CD4-positive, alpha-beta memory T cell (primary cell): ENCODE measurements at regions of chr5 and their contacts with region 1.

Region 1: DNA sequence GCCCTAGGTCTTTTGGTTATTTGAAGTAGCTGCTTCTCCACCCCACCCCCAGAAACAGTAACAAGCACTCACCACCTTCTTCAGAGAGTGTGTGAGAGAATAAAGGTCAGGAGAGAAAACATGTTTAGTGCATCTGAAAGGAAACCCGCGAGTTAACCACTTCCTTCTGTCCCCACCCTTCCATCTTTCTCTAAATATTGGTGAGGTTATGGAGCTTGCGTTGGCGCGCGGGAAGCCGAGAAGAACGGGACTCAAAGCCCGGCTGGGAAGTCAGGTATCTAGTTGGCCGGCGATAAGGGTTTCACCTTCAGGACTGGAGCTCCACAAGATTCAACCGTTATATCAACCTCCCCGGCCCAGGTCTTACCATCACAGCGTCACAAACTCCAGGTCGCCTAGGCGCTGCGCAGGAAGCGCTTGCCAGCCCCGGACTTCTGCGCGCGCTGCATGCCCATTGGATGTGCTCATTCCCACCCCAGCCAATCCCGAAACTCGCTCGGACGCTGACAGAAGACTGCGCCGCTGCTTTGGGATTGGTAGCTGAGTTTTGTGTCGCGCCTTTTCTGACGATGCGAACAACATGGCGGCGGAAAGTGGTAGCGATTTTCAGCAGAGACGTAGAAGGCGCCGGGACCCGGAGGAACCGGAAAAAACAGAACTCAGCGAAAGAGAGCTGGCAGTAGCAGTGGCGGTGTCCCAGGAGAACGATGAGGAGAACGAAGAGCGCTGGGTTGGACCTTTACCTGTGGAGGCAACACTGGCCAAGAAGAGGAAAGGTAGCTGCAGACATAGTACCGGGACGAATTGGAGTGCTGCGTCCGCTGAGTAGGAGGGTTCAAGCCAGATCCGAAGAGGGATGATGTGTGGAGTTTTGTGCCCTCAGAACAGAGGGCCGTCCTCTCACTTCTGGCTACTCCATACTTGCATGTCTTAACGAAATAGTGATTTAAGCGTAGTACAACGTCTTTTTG is at the starts of genes CENPK and PPWD1:
- DNase-seq: peak; percentile 93 to 97 (median 96)
- H3K4me3 ChIP-seq: peak within 1 kb of the TSS; percentile 73 to 80
- H3K4me3 Mint-ChIP-seq: peak within 1 kb of the TSS; percentile 98 to 99 (median 98)
- H3K27ac ChIP-seq: peak within 1 kb of the TSS; percentile 92
- H3K27ac Mint-ChIP-seq: peak within 1 kb of the TSS; percentile 96 to 99 (median 99)
- H3K4me1 ChIP-seq: peaks cover 54% of the 10 kb centered on the region
- H3K4me1 Mint-ChIP-seq: peaks cover 32 to 58% (median 41%) of the 10 kb centered on the region in 4 donors
- H3K27me3 ChIP-seq: no peaks in the 10 kb centered on the region
- H3K27me3 Mint-ChIP-seq: no peaks in the 10 kb centered on the region
- total RNA-seq, gene CENPK: 13.6 to 15.4 TPM
- total RNA-seq, gene PPWD1: 102 to 104 TPM

Region 2: DNA sequence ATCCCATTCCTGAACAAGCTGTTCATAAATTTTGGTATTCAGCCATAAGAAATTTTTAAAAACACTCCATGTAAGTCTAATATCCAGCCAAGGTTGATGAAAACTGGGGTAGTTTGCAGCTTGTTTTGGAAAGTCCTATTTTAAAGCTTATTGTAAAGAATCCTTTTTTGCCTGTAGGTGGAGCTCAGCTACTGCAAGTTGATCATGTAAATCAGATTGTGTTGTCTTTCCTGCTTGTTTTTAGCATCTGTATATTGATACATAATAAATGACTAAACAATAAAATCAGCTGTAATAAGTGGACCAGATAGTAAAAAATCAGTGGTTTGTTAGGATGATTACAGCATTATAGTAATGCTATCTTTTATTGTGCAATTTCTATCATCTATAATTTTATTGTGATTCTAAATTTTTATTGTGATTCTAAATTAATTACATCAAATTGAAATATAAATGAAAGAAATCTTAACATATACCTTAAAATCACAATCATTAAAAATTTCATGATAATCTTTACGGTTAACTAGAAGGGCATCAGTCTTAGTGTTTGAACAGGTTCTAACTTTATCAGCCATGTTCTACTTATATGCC is 751.9 kb before region 1 on chr5:
- CTCF ChIA-PET with region 1: interaction called, 3 read pairs
- POLR2A ChIA-PET with region 1: no interaction called
- intact Hi-C with region 1: loop called (anchors 2 kb)
- DNase-seq: peak; percentile 27 to 44 (median 30)
- H3K4me3 ChIP-seq: no peak overlapping the region
- H3K4me3 Mint-ChIP-seq: no peak overlapping the region
- H3K27ac ChIP-seq: no peak overlapping the region
- H3K27ac Mint-ChIP-seq: no peak overlapping the region
- H3K4me1 ChIP-seq: no peaks in the 10 kb centered on the region
- H3K4me1 Mint-ChIP-seq: no peaks in the 10 kb centered on the region
- H3K27me3 ChIP-seq: no peaks in the 10 kb centered on the region
- H3K27me3 Mint-ChIP-seq: no peaks in the 10 kb centered on the region

Region 3: GRCh38 chr5:65102828-65103711 is 459.9 kb before region 1 on chr5:
- CTCF ChIA-PET with region 1: no interaction called
- POLR2A ChIA-PET with region 1: interaction called, 10 read pairs
- intact Hi-C with region 1: no loop called
- DNase-seq: peak; percentile 52 to 67 (median 57)
- H3K4me3 ChIP-seq: peak overlapping the region; percentile 59 to 60
- H3K4me3 Mint-ChIP-seq: peak overlapping the region; percentile 84 to 90 (median 88)
- H3K27ac ChIP-seq: peak overlapping the region; percentile 57
- H3K27ac Mint-ChIP-seq: peak overlapping the region; percentile 82 to 96 (median 91)
- H3K4me1 ChIP-seq: peaks cover 14% of the 10 kb centered on the region
- H3K4me1 Mint-ChIP-seq: peaks cover 17 to 48% (median 29%) of the 10 kb centered on the region in 4 donors
- H3K27me3 ChIP-seq: no peaks in the 10 kb centered on the region
- H3K27me3 Mint-ChIP-seq: no peaks in the 10 kb centered on the region

Region 4: DNA sequence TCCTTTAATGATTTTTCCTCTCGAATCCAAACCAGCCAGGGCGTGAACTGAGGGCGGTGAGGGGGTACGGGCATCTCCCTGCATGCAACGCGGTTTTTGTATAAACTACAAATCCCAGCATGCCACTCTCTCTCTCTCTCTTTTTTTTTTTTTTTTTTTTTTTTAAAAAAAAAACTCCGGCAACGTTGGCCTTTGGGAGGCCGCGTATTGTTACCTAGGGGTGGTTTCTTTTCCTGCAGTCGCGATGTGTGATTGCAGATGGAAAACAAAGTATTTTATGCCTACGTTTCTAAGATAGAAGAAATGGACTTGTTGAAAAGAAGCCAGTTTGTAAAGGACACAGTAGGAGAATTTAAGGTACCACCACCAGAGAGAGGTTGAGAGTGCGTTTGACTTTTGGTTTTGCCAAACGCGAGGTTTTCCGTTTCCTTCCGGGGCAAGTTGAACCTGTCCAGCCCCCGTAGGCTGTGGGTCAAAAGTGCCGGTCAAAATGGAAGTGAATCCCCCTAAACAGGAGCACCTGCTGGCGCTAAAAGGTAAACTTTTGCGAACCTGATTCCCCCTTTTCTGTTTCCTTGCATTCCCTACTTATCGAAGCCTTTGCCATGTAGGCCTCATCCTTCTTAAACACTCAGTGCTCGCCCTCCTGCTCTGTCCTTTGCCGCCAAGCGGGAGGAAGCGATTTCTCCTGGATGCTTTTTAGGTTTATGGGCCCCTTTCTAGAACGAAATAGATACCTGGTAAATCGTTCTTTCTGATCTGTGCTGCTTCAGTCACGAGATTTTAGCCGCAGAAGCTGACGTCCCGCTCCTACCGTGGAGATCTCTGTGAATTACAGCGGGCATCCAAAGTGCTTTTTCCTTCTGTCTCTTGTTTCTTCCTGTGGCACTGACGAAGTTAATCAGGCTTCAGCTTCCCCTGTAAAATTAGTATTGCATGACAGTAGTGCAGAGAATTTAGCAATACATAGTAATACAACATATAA is 61.8 kb after region 1 on chr5 and contains the starts of genes SHLD3 and TRAPPC13:
- CTCF ChIA-PET with region 1: interaction called, 4 read pairs
- POLR2A ChIA-PET with region 1: interaction called, 70 read pairs
- intact Hi-C with region 1: loop called (anchors 1 kb)
- DNase-seq: peak; percentile 90 to 93 (median 92)
- H3K4me3 ChIP-seq: peak within 1 kb of the TSS; percentile 74 to 98
- H3K4me3 Mint-ChIP-seq: peak within 1 kb of the TSS; percentile 96 to 100 (median 99)
- H3K27ac ChIP-seq: peak within 1 kb of the TSS; percentile 79
- H3K27ac Mint-ChIP-seq: peak within 1 kb of the TSS; percentile 97 to 100 (median 99)
- H3K4me1 ChIP-seq: peaks cover 34% of the 10 kb centered on the region
- H3K4me1 Mint-ChIP-seq: peaks cover 28 to 68% (median 42%) of the 10 kb centered on the region in 4 donors
- H3K27me3 ChIP-seq: no peaks in the 10 kb centered on the region
- H3K27me3 Mint-ChIP-seq: peaks cover 2 to 3% of the 10 kb centered on the region in 2 donors
- total RNA-seq, gene SHLD3: 6.1 to 7.4 TPM
- total RNA-seq, gene TRAPPC13: 20.9 TPM